ENCODE measurements at regions of chr16 and their contacts with region 1.

Region 1: GRCh38 chr16:84629580-84629979 is 11.7 kb upstream of the COTL1 start:
- DNase-seq: no peak
- H3K4me3 ChIP-seq: no peak overlapping the region
- CTCF ChIP-seq: no peak
- POLR2A ChIP-seq: no peak

Region 2: DNA sequence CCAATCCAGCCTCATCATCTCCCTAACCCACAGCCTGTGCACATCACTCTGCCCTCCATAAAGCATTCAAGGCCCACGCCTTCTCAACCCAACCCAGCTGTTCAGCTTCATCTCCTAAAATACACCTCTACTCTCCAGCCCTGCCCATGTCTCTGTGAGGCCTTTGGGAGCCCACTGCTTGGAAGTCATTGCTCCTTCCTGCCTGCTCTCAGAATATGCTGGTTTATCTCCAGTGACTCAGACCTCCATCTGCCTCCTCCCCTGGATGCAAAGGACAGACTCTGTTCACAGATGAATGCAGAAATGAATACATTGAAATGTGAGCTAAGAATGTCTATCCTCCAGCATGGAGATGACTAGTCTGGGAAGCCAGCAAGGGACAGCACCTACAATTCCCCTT is 408.7 kb before region 1 on chr16:
- intact Hi-C with region 1: no loop called
- DNase-seq: no peak
- H3K4me3 ChIP-seq: no peak overlapping the region
- CTCF ChIP-seq: no peak
- POLR2A ChIP-seq: no peak

Region 3: GRCh38 chr16:84738255-84739038 is 108.9 kb after region 1 on chr16:
- intact Hi-C with region 1: loop called (anchors 10 kb)
- DNase-seq: peak; percentile 78 to 94
- H3K4me3 ChIP-seq: no peak overlapping the region
- CTCF ChIP-seq: no peak
- POLR2A ChIP-seq: no peak